ENCODE measurements at regions of chr15 and their contacts with region 1.

Region 1: DNA sequence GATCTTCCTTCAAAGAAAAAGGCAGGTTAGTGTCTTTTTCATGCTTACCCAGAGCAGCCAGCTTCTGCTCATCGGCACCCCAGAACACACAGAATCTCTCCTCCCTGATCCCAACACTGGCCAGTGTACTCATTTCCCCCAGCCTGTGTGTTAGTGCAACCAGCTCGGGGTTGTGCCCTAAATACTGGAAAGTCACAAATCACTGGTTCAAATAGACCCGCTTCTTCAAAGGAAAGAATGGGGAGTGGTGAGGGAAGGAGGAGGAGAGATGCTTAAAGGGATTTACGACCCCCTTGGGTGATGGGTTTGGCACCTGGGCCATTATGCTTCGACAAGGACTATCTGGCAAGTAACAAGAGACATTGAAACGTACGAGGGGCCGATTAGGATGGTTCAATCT is 114.0 kb downstream of the FOXB1 start:
- DNase-seq: peak; percentile 23
- ATAC-seq: peak; percentile 72
- H3K4me3 Mint-ChIP-seq: peak overlapping the region; percentile 63
- H3K27ac Mint-ChIP-seq: peak overlapping the region; percentile 96
- H3K4me1 Mint-ChIP-seq: peaks cover 78% of the 10 kb centered on the region
- H3K27me3 Mint-ChIP-seq: peaks cover 37% of the 10 kb centered on the region
- CTCF ChIP-seq: no peak

Region 2: GRCh38 chr15:60006203-60006862 is 111.8 kb before region 1 on chr15:
- CTCF ChIA-PET with region 1: interaction called, 18 read pairs
- POLR2A ChIA-PET with region 1: interaction called, 5 read pairs
- DNase-seq: peak; percentile 88
- ATAC-seq: peak; percentile 54
- H3K4me3 Mint-ChIP-seq: peak overlapping the region; percentile 87
- H3K27ac Mint-ChIP-seq: peak overlapping the region; percentile 97
- H3K4me1 Mint-ChIP-seq: peaks cover 66% of the 10 kb centered on the region
- H3K27me3 Mint-ChIP-seq: peaks cover 31% of the 10 kb centered on the region
- CTCF ChIP-seq: no peak

Region 3: GRCh38 chr15:60026555-60026954 is 91.6 kb before region 1 on chr15:
- CTCF ChIA-PET with region 1: no interaction called
- POLR2A ChIA-PET with region 1: no interaction called
- DNase-seq: no peak
- ATAC-seq: no peak
- H3K4me3 Mint-ChIP-seq: no peak overlapping the region
- H3K27ac Mint-ChIP-seq: no peak overlapping the region
- H3K4me1 Mint-ChIP-seq: peaks cover 37% of the 10 kb centered on the region
- H3K27me3 Mint-ChIP-seq: no peaks in the 10 kb centered on the region
- CTCF ChIP-seq: no peak

Region 4: GRCh38 chr15:60208709-60209108 is 90.6 kb after region 1 on chr15:
- CTCF ChIA-PET with region 1: no interaction called
- POLR2A ChIA-PET with region 1: no interaction called
- DNase-seq: no peak
- ATAC-seq: no peak
- H3K4me3 Mint-ChIP-seq: no peak overlapping the region
- H3K27ac Mint-ChIP-seq: no peak overlapping the region
- H3K4me1 Mint-ChIP-seq: peaks cover 21% of the 10 kb centered on the region
- H3K27me3 Mint-ChIP-seq: no peaks in the 10 kb centered on the region
- CTCF ChIP-seq: no peak

Region 5: DNA sequence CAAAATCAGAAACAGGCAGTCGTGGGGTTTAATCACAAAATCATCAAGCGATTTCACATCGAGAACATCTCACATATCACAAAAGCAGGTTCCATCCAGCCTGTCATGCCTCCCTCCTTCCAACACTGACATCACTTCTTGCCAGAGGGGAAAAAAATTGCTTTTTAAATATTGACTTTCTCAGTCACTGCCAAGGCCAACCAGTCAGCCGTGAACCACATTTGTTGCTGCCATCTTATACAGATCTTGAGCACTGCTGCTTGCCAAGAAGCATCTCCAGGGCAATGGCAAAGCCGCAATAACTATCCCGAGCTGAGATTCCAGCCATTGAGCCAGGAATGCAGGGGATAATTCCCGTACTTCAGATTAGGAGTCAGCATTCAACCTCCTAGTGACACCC is 105.0 kb after region 1 on chr15:
- CTCF ChIA-PET with region 1: no interaction called
- POLR2A ChIA-PET with region 1: no interaction called
- DNase-seq: no peak
- ATAC-seq: no peak
- H3K4me3 Mint-ChIP-seq: no peak overlapping the region
- H3K27ac Mint-ChIP-seq: no peak overlapping the region
- H3K4me1 Mint-ChIP-seq: peaks cover 17% of the 10 kb centered on the region
- H3K27me3 Mint-ChIP-seq: no peaks in the 10 kb centered on the region
- CTCF ChIP-seq: no peak

Measured in WTC11 (cell line).